ENCODE measurements at regions of chr17 and their contacts with region 1.

Region 1: GRCh38 chr17:49707608-49708514 is at the start of gene SLC35B1:
- DNase-seq: peak; percentile 99 to 100
- H3K4me3 ChIP-seq: peak within 1 kb of the TSS; percentile 72
- CTCF ChIP-seq: peak in 1 of 3 donors; percentile 66
- POLR2A ChIP-seq: no peak
- total RNA-seq, gene SLC35B1: 31.0 to 40.1 (median 35.1) TPM

Region 2: DNA sequence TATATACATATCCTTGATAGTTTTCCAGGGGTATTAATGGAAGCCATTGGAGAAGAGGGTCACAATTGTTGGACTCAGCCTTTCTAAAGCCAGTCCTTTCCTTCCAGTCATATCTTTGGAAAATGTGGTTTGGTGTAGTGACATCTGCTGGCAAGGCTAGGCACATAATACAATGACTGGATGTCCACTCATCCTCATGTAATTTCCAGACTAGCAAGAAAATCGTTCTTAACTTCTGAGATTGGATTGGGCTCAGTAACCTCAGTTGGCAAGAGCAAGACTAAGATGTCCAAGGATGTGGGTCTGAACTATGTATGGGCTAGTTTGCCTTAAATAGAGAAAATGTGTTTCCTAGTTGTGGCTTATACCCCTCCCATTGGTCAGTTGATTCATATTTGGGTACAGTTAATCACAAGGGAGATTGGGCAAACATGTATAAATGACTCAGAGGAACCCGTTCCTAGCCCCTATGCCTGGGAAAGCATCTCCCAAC is 71.9 kb after region 1 on chr17:
- intact Hi-C with region 1: loop called (anchors 5 kb)
- DNase-seq: no peak
- H3K4me3 ChIP-seq: no peak overlapping the region
- CTCF ChIP-seq: no peak
- POLR2A ChIP-seq: no peak

Region 3: GRCh38 chr17:50047488-50048126 is 339.7 kb after region 1 on chr17:
- intact Hi-C with region 1: no loop called
- DNase-seq: no peak
- H3K4me3 ChIP-seq: no peak overlapping the region
- CTCF ChIP-seq: no peak
- POLR2A ChIP-seq: no peak